Activated CD4-positive, alpha-beta T cell treated with anti-CD3 and anti-CD28 coated beads for 36 hours (primary cell): ENCODE measurements at regions of chr2 and their contacts with region 1.

Region 1: GRCh38 chr2:88055371-88056128 is at the start of gene KRCC1:
- DNase-seq: peak; percentile 96
- ATAC-seq: peak; percentile 93
- H3K4me3 Mint-ChIP-seq: peak within 1 kb of the TSS; percentile 92
- H3K27ac Mint-ChIP-seq: peak within 1 kb of the TSS; percentile 99
- H3K4me1 Mint-ChIP-seq: peaks cover 58% of the 10 kb centered on the region
- H3K27me3 Mint-ChIP-seq: no peaks in the 10 kb centered on the region
- total RNA-seq, gene KRCC1: 11.5 to 12.9 TPM

Region 2: DNA sequence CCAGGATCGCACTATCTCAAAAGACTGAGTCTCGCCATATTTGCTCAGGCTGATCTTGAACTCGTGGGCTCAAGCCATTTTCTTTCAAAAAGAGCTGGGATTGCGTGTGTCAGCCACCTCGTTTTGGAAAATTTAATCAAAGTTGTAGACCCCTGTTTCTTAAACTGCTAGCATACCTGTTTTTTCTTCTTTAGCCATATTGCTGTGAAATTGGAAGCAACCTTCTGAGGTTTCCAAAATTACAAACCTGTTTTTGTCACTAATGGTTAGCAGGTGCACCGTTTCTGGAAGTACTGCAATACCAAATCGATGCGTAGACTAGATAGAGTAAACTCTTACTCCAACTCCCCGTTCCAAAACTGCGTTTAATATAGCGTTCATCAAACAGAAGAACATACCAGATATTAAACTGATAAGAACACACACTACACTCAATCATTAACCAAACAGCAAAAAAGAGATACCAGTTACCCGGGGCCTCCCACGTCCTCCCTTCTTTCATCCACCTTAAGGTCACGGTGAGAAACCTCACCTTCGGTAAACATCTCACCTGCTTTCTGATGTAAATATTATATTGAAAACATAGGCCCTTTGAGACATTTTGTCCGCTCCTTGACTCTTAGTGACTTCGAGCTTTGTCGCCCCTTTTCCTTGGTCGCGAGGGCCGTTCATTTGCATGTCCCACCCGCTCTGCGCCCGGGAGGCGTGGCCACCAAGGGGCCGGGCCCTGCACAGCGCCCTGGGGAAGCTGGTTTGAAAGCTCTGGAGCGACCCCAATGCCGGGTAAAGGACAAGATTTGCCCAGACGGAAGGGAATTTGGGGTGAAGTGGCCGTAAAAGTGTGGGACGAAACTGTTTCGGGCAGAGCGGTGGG is 39.2 kb before region 1 on chr2 and contains the start of gene RNU2-63P:
- CTCF ChIA-PET with region 1: interaction called, 3 read pairs
- POLR2A ChIA-PET with region 1: interaction called, 23 read pairs
- intact Hi-C with region 1: loop called (anchors 1 to 2 kb)
- DNase-seq: peak; percentile 86
- ATAC-seq: peak; percentile 93
- H3K4me3 Mint-ChIP-seq: peak within 1 kb of the TSS; percentile 93
- H3K27ac Mint-ChIP-seq: peak within 1 kb of the TSS; percentile 99
- H3K4me1 Mint-ChIP-seq: peaks cover 16% of the 10 kb centered on the region
- H3K27me3 Mint-ChIP-seq: peaks cover 3% of the 10 kb centered on the region
- total RNA-seq, gene RNU2-63P: 1.7 to 8.5 TPM

Region 3: GRCh38 chr2:88090446-88091283 is 35.1 kb after region 1 on chr2:
- CTCF ChIA-PET with region 1: interaction called, 10 read pairs
- POLR2A ChIA-PET with region 1: no interaction called
- intact Hi-C with region 1: no loop called
- DNase-seq: peak; percentile 60
- ATAC-seq: peak; percentile 83
- H3K4me3 Mint-ChIP-seq: no peak overlapping the region
- H3K27ac Mint-ChIP-seq: peak overlapping the region; percentile 73
- H3K4me1 Mint-ChIP-seq: peaks cover 18% of the 10 kb centered on the region
- H3K27me3 Mint-ChIP-seq: no peaks in the 10 kb centered on the region

Region 4: DNA sequence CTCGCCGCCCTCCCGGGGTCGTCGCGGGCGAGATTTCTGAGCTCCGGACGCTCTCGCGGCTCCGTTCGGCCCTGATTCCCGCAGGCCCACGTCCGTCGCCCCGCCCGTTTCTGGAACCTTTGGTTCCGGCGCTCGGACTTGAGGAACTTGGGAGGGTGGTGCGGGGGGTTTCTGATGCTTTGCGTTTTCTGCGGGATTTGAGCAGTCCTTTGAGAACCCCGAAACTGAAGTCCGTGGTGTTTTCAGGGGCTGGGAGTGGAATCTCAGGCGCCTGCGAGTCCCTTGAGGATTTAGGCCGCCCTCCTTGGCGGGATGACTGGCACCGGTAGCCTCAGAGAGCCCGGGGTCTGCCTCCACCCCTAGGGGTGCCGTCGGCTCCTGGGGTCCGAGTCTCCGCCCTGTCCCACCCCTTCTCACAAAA is 114.9 kb after region 1 on chr2:
- CTCF ChIA-PET with region 1: interaction called, 10 read pairs
- POLR2A ChIA-PET with region 1: no interaction called
- intact Hi-C with region 1: no loop called
- DNase-seq: no peak
- ATAC-seq: no peak
- H3K4me3 Mint-ChIP-seq: peak overlapping the region; percentile 50
- H3K27ac Mint-ChIP-seq: no peak overlapping the region
- H3K4me1 Mint-ChIP-seq: no peaks in the 10 kb centered on the region
- H3K27me3 Mint-ChIP-seq: peaks cover 16% of the 10 kb centered on the region

Region 5: DNA sequence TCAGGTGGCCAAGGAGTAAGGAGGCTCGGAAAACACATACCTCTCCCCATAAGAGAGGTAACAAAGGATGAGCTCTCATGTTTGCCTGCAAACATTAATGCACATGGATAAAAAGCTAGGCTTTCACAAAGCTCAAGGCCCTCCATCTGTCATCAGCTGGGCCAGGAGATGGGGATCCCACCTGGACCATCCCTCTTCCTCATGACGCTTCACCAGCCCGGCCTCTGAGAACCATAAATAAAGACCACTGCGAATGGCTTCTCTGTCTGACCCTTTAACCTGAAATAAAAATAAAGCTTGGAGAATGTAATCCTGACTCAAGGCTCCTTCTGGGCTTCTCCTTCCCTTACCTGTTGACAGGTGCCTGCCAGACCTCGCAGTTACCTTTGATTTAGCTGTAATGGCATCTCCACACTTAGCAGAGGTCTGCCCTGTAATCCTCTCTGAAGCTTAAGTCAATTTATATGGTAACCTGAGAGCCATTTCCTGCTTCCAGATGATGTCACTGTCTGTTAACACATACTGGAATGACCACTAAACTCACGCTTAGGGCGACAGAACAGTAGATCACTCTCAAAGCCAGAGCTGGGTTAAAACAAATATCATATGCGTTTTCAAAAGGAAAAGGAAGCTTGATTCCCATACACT is 426.3 kb after region 1 on chr2:
- CTCF ChIA-PET with region 1: no interaction called
- POLR2A ChIA-PET with region 1: no interaction called
- intact Hi-C with region 1: no loop called
- DNase-seq: no peak
- ATAC-seq: no peak
- H3K4me3 Mint-ChIP-seq: no peak overlapping the region
- H3K27ac Mint-ChIP-seq: no peak overlapping the region
- H3K4me1 Mint-ChIP-seq: no peaks in the 10 kb centered on the region
- H3K27me3 Mint-ChIP-seq: peaks cover 13% of the 10 kb centered on the region

Region 6: DNA sequence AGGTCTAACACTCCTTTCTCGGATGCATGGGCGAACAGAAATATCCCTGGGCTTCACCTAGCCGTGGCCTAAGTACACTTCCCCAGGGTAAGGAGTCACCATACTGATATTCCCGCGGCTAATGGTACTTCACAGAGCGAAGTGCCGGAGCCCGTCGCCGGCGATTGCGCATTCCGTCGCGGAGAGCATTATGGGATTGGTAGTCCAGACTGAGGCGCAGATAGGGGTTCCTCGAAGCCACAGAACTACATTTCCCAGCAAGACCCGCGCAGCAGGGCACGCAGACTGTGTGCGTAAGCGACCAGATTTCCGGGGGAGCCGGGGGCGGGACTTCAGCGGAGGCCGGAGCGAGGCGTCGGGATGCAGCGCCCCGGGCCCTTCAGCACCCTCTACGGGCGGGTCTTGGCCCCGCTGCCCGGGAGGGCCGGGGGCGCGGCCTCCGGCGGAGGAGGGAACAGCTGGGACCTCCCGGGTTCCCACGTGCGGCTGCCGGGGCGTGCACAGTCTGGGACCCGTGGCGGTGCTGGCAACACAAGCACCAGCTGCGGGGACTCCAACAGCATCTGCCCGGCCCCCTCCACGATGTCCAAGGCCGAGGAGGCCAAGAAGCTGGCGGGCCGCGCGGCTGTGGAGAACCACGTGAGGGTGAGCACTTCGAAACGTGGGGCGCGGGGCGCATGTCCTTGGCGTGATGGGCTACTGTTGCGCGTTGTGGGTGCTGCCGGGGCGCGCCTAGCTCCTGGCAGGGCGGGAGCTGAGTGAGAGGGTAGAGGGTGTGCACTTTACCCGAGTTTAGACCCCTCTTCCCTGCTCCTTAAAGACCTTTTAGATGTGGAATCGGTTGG is 636.0 kb after region 1 on chr2 and contains the start of gene RPIA:
- CTCF ChIA-PET with region 1: no interaction called
- POLR2A ChIA-PET with region 1: no interaction called
- intact Hi-C with region 1: loop called (anchors 5 kb)
- DNase-seq: peak; percentile 99
- ATAC-seq: peak; percentile 96
- H3K4me3 Mint-ChIP-seq: peak within 1 kb of the TSS; percentile 95
- H3K27ac Mint-ChIP-seq: peak within 1 kb of the TSS; percentile 93
- H3K4me1 Mint-ChIP-seq: peaks cover 52% of the 10 kb centered on the region
- H3K27me3 Mint-ChIP-seq: no peaks in the 10 kb centered on the region
- total RNA-seq, gene RPIA: 38.3 to 65.4 TPM